GM12878 (cell line): ENCODE measurements at regions of chr17 and their contacts with region 1.

Region 1: DNA sequence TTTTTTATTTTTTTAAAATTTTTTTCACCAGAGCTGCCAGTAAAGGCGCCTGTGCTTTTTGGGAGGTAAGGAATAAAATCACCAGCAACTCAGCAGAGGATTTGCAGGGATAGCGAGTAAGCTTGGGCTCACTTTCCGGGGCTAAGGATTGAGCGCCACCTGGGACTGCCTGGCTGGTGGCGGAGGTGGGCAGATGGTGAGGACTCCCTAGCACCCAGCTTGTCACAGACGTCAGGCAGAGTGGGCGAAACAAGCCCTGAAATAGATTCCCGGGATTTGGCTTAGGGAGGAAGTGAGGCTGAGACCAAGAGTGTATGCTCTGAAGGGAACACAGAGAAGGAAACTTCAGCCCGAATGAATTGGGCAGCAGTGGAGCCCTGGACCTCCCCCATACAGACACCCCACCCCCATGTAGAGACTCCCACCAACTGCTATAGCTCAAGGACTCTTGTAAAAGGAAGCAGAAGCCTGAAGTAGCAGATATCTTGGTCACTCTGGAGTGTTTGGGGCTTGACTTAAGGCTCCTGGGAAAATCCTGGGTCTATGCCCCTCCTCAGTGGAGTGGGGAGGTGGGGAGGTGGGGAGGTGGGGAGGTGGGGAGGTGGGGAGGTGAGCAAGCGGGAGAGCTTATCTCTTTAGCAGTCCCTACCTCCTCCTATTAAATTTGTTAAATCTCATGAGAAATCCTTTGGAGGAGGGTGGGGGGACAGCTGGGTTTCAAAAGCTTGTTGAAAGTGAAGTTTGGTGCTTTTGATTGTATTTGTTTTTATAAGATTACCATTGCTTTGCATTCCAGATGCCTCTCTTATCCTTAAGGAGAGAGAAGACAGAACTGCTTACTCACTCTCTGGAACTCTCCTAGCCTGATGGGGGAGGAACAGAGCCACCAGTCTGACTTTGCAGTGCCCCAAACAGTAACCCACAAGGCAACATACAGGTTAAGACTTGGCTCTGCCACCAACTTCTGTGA is 8.2 kb downstream of the ARL4D start:
- DNase-seq: no peak
- ATAC-seq: no peak
- H3K4me3 ChIP-seq: no peak overlapping the region
- H3K27ac ChIP-seq: no peak overlapping the region
- H3K4me1 ChIP-seq: peaks cover 4% of the 10 kb centered on the region
- H3K27me3 ChIP-seq: no peaks in the 10 kb centered on the region; a peak in 2 of 4 replicates
- CTCF ChIP-seq: no peak
- EP300 ChIP-seq: no peak
- POLR2A ChIP-seq: no peak
- RAD21 ChIP-seq: no peak

Region 2: DNA sequence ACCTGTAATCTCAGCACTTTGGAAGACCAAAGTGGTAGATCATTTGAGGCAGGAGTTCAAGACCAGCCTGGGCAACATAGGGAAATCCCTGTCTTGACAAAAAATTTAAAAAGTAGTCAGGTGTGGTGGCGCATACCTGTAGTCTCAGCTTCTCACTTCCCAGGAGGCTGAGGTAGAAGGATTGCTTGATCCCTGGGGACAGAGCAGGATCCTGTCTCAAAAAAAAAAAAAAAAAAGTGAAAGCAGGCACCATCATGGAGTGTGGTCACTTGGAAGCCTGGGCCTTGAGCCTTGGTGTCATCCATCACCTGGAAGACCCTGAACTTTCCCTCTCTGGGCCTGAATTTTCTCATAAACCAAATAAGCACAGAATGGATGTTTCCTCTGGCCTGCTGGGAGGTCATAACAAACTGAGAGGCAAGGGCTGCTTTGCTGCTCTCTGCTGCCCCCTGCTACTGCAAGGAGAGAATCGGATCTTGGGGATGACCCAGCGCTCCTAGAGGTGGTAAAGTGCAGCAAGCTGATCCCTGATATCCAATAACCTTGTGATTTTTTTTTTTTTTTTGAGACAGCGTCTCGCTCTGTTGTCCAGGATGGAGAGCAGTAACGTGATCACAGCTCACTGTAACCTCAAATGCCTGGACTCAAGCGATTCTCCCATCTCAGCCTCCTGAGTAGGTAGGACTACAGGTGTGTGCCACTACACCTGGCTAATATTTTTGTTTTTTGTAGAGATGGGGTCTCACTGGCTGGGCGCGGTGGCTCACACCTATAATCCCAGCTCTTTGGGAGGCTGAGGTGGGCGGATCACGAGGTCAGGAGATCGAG is 97.2 kb before region 1 on chr17:
- CTCF ChIA-PET with region 1: no interaction called
- POLR2A ChIA-PET with region 1: no interaction called
- RAD21 ChIA-PET with region 1: no interaction called
- SMC1A ChIA-PET with region 1: no interaction called
- in situ Hi-C with region 1: no loop called
- intact Hi-C with region 1: no loop called
- DNase-seq: no peak
- ATAC-seq: no peak
- H3K4me3 ChIP-seq: no peak overlapping the region
- H3K27ac ChIP-seq: no peak overlapping the region
- H3K4me1 ChIP-seq: no peaks in the 10 kb centered on the region
- H3K27me3 ChIP-seq: no peaks in the 10 kb centered on the region
- CTCF ChIP-seq: no peak
- EP300 ChIP-seq: no peak
- POLR2A ChIP-seq: no peak
- RAD21 ChIP-seq: no peak

Region 3: DNA sequence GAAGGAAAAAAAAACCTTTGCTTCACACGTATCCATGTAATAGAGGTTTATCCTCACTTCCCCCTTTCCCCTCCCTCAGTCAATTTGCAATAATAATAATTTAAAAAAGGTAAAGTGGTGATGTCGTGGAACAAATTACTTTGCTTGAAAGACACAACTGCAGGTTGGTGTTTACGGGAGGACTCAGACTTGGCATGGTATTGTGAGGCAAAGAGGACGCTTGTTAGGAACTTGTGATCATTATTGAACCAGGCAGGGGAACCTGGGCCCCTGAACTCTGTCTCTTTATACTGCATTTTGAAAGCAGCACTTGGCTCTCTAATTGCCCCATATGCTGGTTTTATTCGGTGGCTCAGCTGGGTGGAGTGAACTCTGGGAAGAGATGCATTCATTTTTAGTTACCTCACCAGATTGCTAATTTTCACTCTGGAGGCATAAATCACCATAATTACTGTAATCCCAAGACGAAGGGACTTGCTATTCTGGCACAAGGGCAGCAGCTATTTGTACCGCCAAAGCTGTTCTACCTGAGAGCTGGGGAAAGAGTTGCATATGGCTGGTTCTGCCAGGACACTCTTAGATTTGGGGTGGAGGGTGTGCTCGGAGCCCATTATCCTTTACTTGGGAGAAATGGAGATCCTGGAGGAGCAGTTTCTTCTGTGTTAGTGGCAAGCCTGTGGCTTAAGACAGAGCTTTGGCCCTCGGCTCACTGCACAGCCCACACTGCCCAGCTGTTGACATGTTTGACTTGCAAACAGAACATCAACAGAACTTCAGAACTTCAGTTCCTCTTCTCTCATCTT is 71.1 kb after region 1 on chr17:
- CTCF ChIA-PET with region 1: interaction called, 4 read pairs
- POLR2A ChIA-PET with region 1: no interaction called
- RAD21 ChIA-PET with region 1: no interaction called
- SMC1A ChIA-PET with region 1: no interaction called
- in situ Hi-C with region 1: no loop called
- intact Hi-C with region 1: loop called (anchors 5 kb)
- DNase-seq: no peak
- ATAC-seq: no peak
- H3K4me3 ChIP-seq: no peak overlapping the region
- H3K27ac ChIP-seq: no peak overlapping the region
- H3K4me1 ChIP-seq: peaks cover 2% of the 10 kb centered on the region; the same call in 1 of the 2 replicates
- H3K27me3 ChIP-seq: no peaks in the 10 kb centered on the region
- CTCF ChIP-seq: no peak
- EP300 ChIP-seq: no peak
- POLR2A ChIP-seq: no peak
- RAD21 ChIP-seq: no peak